ENCODE measurements at regions of chr2 and their contacts with region 1.

Region 1: DNA sequence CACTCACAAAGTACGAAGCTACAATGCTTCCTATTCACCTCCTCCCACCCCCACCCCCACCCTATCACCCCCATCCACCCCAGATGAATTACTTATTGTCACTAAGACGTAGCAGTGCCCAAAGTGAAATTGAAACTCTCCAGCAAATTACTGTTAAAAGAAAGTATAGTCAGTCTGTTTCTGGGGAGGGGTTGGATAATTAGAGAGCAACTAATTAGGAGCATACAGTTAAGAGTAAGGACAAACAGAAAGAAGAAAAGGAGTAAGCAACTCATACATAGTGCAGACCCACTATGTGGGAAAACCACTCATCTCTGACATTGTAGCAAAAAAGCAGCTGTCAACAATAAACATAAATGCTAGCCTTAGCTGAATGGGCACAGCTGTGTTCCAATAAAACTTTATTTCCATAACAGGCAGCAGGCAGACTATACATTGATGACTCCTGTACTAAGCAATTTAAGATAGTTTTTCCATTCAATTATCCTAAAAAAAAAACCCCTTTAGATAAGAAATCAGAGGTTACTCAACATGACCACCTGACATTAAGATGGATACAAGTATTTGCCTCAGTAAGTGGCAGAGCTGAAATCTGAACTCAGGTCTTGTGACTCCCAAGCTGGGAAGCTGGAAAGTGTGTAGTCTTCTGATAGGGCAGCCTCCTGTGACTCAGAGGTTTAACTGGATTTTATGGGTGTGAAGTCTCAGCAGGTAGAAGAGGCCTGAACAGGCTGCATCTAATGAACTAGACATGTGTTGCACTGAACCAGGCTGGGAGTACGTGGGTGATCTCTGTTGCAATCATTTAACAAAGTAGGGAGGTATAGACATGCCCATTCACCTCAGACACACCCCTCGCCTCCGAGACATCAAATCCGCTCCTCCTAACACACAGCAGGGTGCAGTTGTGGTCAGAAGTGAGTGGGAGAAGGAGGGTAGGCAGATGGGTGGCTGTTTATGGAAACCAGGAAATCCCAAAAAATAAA is 171.8 kb upstream of the KLF7 start:
- DNase-seq: no peak
- ATAC-seq: peak; percentile 52
- H3K4me3 Mint-ChIP-seq: peak overlapping the region; percentile 37
- H3K27ac Mint-ChIP-seq: peak overlapping the region; percentile 66
- H3K4me1 Mint-ChIP-seq: peaks cover 39% of the 10 kb centered on the region
- H3K27me3 Mint-ChIP-seq: no peaks in the 10 kb centered on the region

Region 2: GRCh38 chr2:207352978-207353671 is 15.6 kb after region 1 on chr2:
- CTCF ChIA-PET with region 1: interaction called, 13 read pairs
- POLR2A ChIA-PET with region 1: no interaction called
- DNase-seq: peak; percentile 36
- ATAC-seq: peak; percentile 39
- H3K4me3 Mint-ChIP-seq: no peak overlapping the region
- H3K27ac Mint-ChIP-seq: no peak overlapping the region
- H3K4me1 Mint-ChIP-seq: peaks cover 6% of the 10 kb centered on the region
- H3K27me3 Mint-ChIP-seq: peaks cover 3% of the 10 kb centered on the region